Spleen (tissue), 13 donors: ENCODE measurements at regions of chr4 and their contacts with region 1.

Region 1: GRCh38 chr4:52983563-52984303 is 121.6 kb downstream of the RASL11B start:
- DNase-seq: no peak
- H3K4me3 ChIP-seq: no peak overlapping the region
- H3K27ac ChIP-seq: peak overlapping the region in 6 of 8 donors; percentile 35 to 65 (median 56)
- H3K4me1 ChIP-seq: peaks cover 5 to 36% (median 25%) of the 10 kb centered on the region in 6 donors
- H3K27me3 ChIP-seq: no peaks in the 10 kb centered on the region
- CTCF ChIP-seq: peak; percentile 40 to 76 (median 62)
- POLR2A ChIP-seq: no peak

Region 2: GRCh38 chr4:52376132-52376704 is 607.5 kb before region 1 on chr4:
- intact Hi-C with region 1: loop called (anchors 5 kb)
- DNase-seq: no peak
- H3K4me3 ChIP-seq: no peak overlapping the region
- H3K27ac ChIP-seq: no peak overlapping the region
- H3K4me1 ChIP-seq: no peaks in the 10 kb centered on the region
- H3K27me3 ChIP-seq: peaks cover 0 to 15% (median 0%) of the 10 kb centered on the region in 7 donors
- CTCF ChIP-seq: peak in 10 of 11 experiments; percentile 22 to 70 (median 53)
- POLR2A ChIP-seq: no peak

Region 3: GRCh38 chr4:52545099-52546069 is 438.3 kb before region 1 on chr4:
- intact Hi-C with region 1: loop called (anchors 5 kb)
- DNase-seq: peak; percentile 77
- H3K4me3 ChIP-seq: no peak overlapping the region
- H3K27ac ChIP-seq: no peak overlapping the region
- H3K4me1 ChIP-seq: peaks cover 0 to 8% (median 3%) of the 10 kb centered on the region in 6 donors
- H3K27me3 ChIP-seq: peaks cover 0 to 21% (median 0%) of the 10 kb centered on the region in 7 donors
- CTCF ChIP-seq: peak; percentile 60 to 89 (median 85)
- POLR2A ChIP-seq: no peak